Caco-2 (cell line): ENCODE measurements at regions of chr1 and their contacts with region 1.

Region 1: GRCh38 chr1:186915555-186915954 is 86.8 kb downstream of the PLA2G4A start:
- DNase-seq: no peak
- H3K4me3 ChIP-seq: no peak overlapping the region
- H3K4me3 Mint-ChIP-seq: no peak overlapping the region
- H3K27ac Mint-ChIP-seq: no peak overlapping the region
- H3K4me1 ChIP-seq: peaks cover 3% of the 10 kb centered on the region; the same call in 1 of the 2 replicates
- H3K4me1 Mint-ChIP-seq: no peaks in the 10 kb centered on the region
- H3K27me3 ChIP-seq: no peaks in the 10 kb centered on the region
- H3K27me3 Mint-ChIP-seq: no peaks in the 10 kb centered on the region
- CTCF ChIP-seq: no peak

Region 2: GRCh38 chr1:186482661-186483255 is 432.8 kb before region 1 on chr1:
- CTCF ChIA-PET with region 1: no interaction called
- POLR2A ChIA-PET with region 1: no interaction called
- intact Hi-C with region 1: loop called (anchors 1 kb)
- DNase-seq: peak; percentile 67 to 75
- H3K4me3 ChIP-seq: no peak overlapping the region
- H3K4me3 Mint-ChIP-seq: no peak overlapping the region
- H3K27ac Mint-ChIP-seq: no peak overlapping the region
- H3K4me1 ChIP-seq: peaks cover 53% of the 10 kb centered on the region
- H3K4me1 Mint-ChIP-seq: peaks cover 37% of the 10 kb centered on the region
- H3K27me3 ChIP-seq: no peaks in the 10 kb centered on the region
- H3K27me3 Mint-ChIP-seq: no peaks in the 10 kb centered on the region
- CTCF ChIP-seq: peak; percentile 88 to 94

Region 3: GRCh38 chr1:186605762-186606350 is 309.7 kb before region 1 on chr1:
- CTCF ChIA-PET with region 1: no interaction called
- POLR2A ChIA-PET with region 1: no interaction called
- intact Hi-C with region 1: loop called (anchors 2 kb)
- DNase-seq: peak; percentile 70 to 72
- H3K4me3 ChIP-seq: no peak overlapping the region
- H3K4me3 Mint-ChIP-seq: no peak overlapping the region
- H3K27ac Mint-ChIP-seq: peak overlapping the region; percentile 43
- H3K4me1 ChIP-seq: peaks cover 16% of the 10 kb centered on the region
- H3K4me1 Mint-ChIP-seq: peaks cover 9% of the 10 kb centered on the region
- H3K27me3 ChIP-seq: no peaks in the 10 kb centered on the region
- H3K27me3 Mint-ChIP-seq: no peaks in the 10 kb centered on the region
- CTCF ChIP-seq: peak; percentile 70 to 71

Region 4: DNA sequence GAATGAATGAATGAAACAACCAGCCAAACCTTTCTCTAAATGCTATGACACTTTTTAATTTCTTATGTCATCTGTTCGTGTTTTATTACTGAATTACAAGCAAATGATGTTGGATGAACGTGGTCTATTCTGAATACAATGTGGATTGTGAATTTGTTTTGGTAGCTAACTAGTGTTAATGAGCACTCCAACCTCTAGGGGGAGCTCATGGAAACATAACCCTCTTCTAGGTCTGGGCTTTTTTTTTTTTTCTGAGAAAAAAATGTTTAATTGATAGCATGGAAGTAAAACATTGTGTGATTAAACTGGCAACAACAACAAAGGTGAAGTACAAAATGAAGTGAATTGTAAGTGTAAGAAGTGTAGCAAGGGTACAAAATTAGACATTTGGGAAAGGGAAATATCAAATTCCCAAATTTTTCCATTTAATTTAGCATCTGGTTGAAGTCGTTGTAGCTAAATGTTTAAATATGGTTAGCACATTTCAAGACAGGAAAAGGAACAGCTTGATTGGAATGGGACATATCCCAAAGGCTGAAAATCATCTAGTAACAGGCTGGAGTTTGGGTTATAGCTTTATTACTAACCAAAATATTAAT is 192.7 kb before region 1 on chr1:
- CTCF ChIA-PET with region 1: interaction called, 6 read pairs
- POLR2A ChIA-PET with region 1: interaction called, 4 read pairs
- intact Hi-C with region 1: loop called (anchors 5 kb)
- DNase-seq: peak; percentile 41 to 62
- H3K4me3 ChIP-seq: no peak overlapping the region
- H3K4me3 Mint-ChIP-seq: no peak overlapping the region
- H3K27ac Mint-ChIP-seq: no peak overlapping the region
- H3K4me1 ChIP-seq: no peaks in the 10 kb centered on the region
- H3K4me1 Mint-ChIP-seq: no peaks in the 10 kb centered on the region
- H3K27me3 ChIP-seq: no peaks in the 10 kb centered on the region
- H3K27me3 Mint-ChIP-seq: no peaks in the 10 kb centered on the region
- CTCF ChIP-seq: peak; percentile 50 to 72

Region 5: DNA sequence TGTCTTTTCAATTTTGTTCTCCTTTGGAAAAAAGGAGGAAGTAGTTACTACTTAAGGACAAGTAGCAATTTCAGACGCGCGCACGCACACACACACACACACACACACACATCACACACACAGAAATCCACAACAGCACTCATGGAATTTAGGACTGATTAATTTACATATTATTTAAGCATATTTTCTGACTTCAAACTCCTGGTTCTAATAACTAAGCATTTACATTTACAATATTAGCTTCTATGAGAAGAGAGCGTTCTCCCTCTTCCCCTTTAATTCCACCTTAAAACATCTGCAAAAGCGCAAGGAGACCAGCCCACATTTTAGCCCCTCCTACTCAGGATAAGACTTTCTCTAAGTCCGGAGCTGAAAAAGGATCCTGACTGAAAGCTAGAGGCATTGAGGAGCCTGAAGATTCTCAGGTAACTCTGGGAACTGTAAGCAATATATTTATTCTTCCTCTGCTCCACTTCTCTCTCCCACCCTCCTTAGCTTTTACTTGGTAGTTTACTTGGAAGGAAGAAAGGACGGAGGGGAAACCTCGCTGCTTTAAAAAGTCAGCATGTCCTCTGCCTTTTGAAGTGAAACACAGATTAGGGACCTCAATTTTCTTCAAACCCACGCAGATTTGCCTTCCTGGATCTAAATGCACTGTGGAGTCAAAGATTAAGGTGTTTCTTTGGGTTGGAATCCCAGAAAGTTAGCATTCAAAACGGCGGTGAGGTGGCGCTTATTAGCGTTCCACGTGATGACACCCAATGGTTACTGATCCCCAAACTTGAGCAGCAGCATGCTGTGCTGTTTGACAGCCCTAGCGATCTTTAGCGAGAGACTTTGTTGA is 86.7 kb before region 1 on chr1 and contains the start of gene PLA2G4A:
- CTCF ChIA-PET with region 1: no interaction called
- POLR2A ChIA-PET with region 1: no interaction called
- intact Hi-C with region 1: loop called (anchors 5 kb)
- DNase-seq: peak; percentile 40 to 44
- H3K4me3 ChIP-seq: peak within 1 kb of the TSS; percentile 46
- H3K4me3 Mint-ChIP-seq: peak within 1 kb of the TSS; percentile 89
- H3K27ac Mint-ChIP-seq: no peak within 1 kb of the TSS
- H3K4me1 ChIP-seq: no peaks in the 10 kb centered on the region
- H3K4me1 Mint-ChIP-seq: peaks cover 6% of the 10 kb centered on the region
- H3K27me3 ChIP-seq: no peaks in the 10 kb centered on the region
- H3K27me3 Mint-ChIP-seq: peaks cover 8% of the 10 kb centered on the region
- CTCF ChIP-seq: no peak
- total RNA-seq, gene PLA2G4A: 2.0 and 3.4 TPM in 2 replicates

Region 6: GRCh38 chr1:187157552-187157951 is 242.0 kb after region 1 on chr1:
- CTCF ChIA-PET with region 1: no interaction called
- POLR2A ChIA-PET with region 1: no interaction called
- intact Hi-C with region 1: no loop called
- DNase-seq: no peak
- H3K4me3 ChIP-seq: no peak overlapping the region
- H3K4me3 Mint-ChIP-seq: no peak overlapping the region
- H3K27ac Mint-ChIP-seq: no peak overlapping the region
- H3K4me1 ChIP-seq: no peaks in the 10 kb centered on the region
- H3K4me1 Mint-ChIP-seq: no peaks in the 10 kb centered on the region
- H3K27me3 ChIP-seq: no peaks in the 10 kb centered on the region
- H3K27me3 Mint-ChIP-seq: no peaks in the 10 kb centered on the region
- CTCF ChIP-seq: no peak